ENCODE measurements at regions of chr21 and their contacts with region 1.

Region 1: GRCh38 chr21:45439161-45439872 is 34.4 kb downstream of the COL18A1 start:
- DNase-seq: peak; percentile 77
- H3K4me3 ChIP-seq: peak overlapping the region in 1 of 2 donors; percentile 6
- H3K27ac ChIP-seq: peak overlapping the region; percentile 60
- H3K4me1 ChIP-seq: no peaks in the 10 kb centered on the region
- H3K27me3 ChIP-seq: peaks cover 3% of the 10 kb centered on the region
- CTCF ChIP-seq: peak; percentile 93 to 99 (median 98)
- POLR2A ChIP-seq: no peak

Region 2: DNA sequence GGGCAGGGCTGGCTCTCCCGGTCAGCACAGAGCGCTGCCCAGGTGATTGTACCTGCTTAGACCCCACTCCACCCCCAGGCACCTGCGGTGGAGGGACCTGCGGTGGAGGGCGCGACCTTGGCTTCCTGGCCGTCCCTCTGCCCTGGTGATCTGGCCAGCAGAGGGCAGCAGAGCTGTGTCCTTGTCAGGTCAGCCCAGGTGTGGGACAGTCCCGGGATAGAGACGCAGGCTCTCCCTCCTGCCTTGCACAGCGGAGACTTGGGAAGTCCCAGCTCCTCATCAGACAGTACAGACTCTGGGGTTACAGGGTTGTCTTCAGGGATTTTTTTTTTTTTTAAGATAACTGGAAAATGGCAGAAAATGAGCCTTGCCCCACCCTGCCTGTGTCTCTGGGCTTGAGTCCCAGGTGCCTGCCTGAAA is 489.5 kb before region 1 on chr21:
- intact Hi-C with region 1: loop called (anchors 10 kb)
- DNase-seq: peak; percentile 84
- H3K4me3 ChIP-seq: no peak overlapping the region
- H3K27ac ChIP-seq: no peak overlapping the region
- H3K4me1 ChIP-seq: no peaks in the 10 kb centered on the region
- H3K27me3 ChIP-seq: no peaks in the 10 kb centered on the region
- CTCF ChIP-seq: peak; percentile 94 to 95 (median 95)
- POLR2A ChIP-seq: no peak

Region 3: DNA sequence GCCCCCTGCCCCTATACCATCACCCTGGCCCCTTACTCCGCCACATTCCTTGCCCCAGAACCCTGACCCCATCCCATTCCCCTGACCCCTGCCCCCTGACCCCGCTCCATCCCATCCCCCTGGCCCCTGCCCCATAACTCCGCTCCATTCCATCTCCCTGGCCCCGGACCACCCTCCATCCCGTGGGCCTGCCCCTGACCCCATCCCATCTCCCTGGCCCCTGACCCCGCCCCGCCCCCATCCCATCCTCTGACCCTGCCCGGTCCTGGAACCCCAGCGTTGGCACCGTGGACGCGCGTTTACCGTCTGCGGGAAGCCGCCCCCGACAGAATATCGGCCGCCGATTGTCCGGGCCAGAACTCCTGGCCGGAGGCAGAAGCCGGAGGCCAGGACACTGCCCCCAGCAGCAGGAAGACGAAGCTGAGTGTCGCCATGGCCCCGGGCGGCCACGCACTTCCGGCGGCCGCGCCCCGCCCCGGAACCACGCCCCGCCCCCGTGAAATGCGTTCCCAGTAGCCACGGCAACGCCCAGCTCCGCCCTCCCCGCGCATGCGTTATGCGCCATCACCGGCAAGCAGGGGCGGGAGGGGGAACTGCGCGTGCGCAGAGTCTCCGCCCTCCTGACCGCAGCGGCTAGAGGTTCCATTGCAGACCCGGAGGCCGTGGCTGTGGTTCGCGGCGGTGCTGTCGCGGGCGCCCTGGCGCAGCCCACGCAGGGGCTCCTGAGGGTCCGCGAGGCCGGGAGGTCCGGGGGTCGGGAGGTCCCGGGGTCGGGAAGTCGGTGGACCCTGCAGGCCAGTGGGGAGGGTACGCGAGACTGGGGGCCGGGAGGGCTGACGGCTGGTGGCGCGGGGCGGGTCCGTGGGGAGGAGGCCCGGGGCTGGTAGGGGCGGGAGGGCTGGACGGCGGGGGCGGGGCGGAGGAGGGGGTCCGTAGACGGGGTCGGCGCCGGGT is 151.6 kb before region 1 on chr21 and contains the start of gene POFUT2:
- intact Hi-C with region 1: loop called (anchors 1 kb)
- DNase-seq: peak; percentile 94
- H3K4me3 ChIP-seq: peak within 1 kb of the TSS; percentile 71 to 90
- H3K27ac ChIP-seq: peak within 1 kb of the TSS; percentile 67 to 76
- H3K4me1 ChIP-seq: peaks cover 11% of the 10 kb centered on the region
- H3K27me3 ChIP-seq: no peaks in the 10 kb centered on the region
- CTCF ChIP-seq: peak in 2 of 4 experiments; percentile 41 to 43
- POLR2A ChIP-seq: peak; percentile 86
- total RNA-seq, gene POFUT2: 20.2 to 52.4 TPM

Region 4: GRCh38 chr21:45404730-45405270 is 34.5 kb before region 1 on chr21 and contains the start of gene COL18A1:
- intact Hi-C with region 1: loop called (anchors 5 kb)
- DNase-seq: peak; percentile 51
- H3K4me3 ChIP-seq: peak within 1 kb of the TSS; percentile 46 to 51
- H3K27ac ChIP-seq: peak within 1 kb of the TSS; percentile 53 to 76
- H3K4me1 ChIP-seq: peaks cover 20% of the 10 kb centered on the region
- H3K27me3 ChIP-seq: no peaks in the 10 kb centered on the region
- CTCF ChIP-seq: no peak
- POLR2A ChIP-seq: no peak
- total RNA-seq, gene COL18A1: 56.2 to 229 TPM